ENCODE measurements at regions of chr5 and their contacts with region 1.

Region 1: GRCh38 chr5:164475339-164475977 is 970.0 kb downstream of the MAT2B start:
- DNase-seq: no peak
- ATAC-seq: no peak
- H3K4me3 ChIP-seq: no peak overlapping the region
- H3K27ac ChIP-seq: no peak overlapping the region
- H3K4me1 ChIP-seq: no peaks in the 10 kb centered on the region
- H3K27me3 ChIP-seq: no peaks in the 10 kb centered on the region
- CTCF ChIP-seq: peak in 10 of 12 donors; percentile 31 to 61 (median 50)
- POLR2A ChIP-seq: no peak

Region 2: DNA sequence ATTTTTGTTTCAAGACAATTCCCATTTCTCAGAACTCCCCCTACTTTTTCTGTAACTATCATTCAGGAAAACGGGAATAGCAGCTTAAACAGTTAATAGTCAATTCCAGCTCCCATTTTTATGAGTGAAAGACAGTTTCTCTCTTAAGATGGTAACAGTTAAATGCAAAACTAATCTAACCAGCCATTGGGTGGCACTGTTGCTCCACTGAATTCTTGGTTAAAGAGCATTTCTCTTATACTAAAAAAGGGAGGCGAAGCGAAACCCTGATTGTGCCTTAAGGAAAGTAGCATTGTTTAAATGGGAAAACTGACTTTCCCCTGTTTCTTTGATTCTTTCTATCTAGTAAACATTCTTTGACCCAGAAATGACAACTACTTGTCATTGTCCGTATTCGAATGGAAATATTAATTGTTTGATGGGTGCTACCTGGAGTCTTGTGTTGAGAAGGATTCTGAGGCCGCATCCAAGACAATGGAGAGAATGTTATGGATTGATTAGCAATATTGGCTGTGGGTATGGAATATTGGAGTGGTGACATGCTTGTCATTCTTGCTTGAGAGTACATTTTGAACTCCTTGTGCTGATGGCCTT is 462.3 kb before region 1 on chr5:
- intact Hi-C with region 1: loop called in 2 of 10 experiments (anchors 10 kb)
- DNase-seq: peak in 3 of 5 donors; percentile 18 to 29 (median 27)
- ATAC-seq: no peak
- H3K4me3 ChIP-seq: no peak overlapping the region
- H3K27ac ChIP-seq: no peak overlapping the region
- H3K4me1 ChIP-seq: no peaks in the 10 kb centered on the region
- H3K27me3 ChIP-seq: peaks cover 0 to 2% (median 0%) of the 10 kb centered on the region in 9 donors
- CTCF ChIP-seq: peak; percentile 47 to 72 (median 60)
- POLR2A ChIP-seq: no peak

Region 3: DNA sequence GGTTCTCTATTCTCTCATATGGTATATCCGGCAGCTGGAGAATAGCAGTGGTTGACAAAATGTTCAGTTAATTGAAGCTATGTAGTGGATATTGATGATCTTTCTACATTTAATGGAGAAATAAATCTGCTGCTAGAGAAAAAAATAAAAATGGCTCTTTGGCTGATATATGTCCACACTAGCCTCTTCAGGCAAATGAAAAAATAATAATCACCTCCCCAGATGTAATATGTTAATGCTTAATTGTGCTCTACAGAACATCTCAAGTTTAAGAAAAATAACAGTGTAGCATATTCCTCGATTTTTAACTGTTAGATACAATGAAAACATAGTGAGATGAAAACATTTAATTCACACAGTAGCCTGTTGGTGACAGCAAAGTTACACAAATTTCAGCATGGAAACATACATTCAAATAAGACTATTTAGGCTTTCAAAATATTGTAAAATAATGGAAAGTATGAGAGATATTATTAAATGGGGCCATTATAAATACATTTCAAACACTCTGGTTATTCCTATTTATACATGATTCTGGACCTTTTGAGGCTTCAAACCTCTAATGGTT is 427.0 kb before region 1 on chr5:
- intact Hi-C with region 1: loop called in 5 of 10 experiments (anchors 5 to 10 kb)
- DNase-seq: no peak
- ATAC-seq: no peak
- H3K4me3 ChIP-seq: no peak overlapping the region
- H3K27ac ChIP-seq: no peak overlapping the region
- H3K4me1 ChIP-seq: no peaks in the 10 kb centered on the region
- H3K27me3 ChIP-seq: peaks cover 0 to 6% (median 0%) of the 10 kb centered on the region in 9 donors
- CTCF ChIP-seq: peak in 8 of 12 donors; percentile 20 to 47 (median 29)
- POLR2A ChIP-seq: no peak

Region 4: GRCh38 chr5:164153469-164154172 is 321.8 kb before region 1 on chr5:
- intact Hi-C with region 1: loop called in 1 of 10 experiments (anchors 10 kb)
- DNase-seq: no peak
- ATAC-seq: no peak
- H3K4me3 ChIP-seq: no peak overlapping the region
- H3K27ac ChIP-seq: no peak overlapping the region
- H3K4me1 ChIP-seq: no peaks in the 10 kb centered on the region
- H3K27me3 ChIP-seq: no peaks in the 10 kb centered on the region
- CTCF ChIP-seq: no peak
- POLR2A ChIP-seq: no peak

Region 5: DNA sequence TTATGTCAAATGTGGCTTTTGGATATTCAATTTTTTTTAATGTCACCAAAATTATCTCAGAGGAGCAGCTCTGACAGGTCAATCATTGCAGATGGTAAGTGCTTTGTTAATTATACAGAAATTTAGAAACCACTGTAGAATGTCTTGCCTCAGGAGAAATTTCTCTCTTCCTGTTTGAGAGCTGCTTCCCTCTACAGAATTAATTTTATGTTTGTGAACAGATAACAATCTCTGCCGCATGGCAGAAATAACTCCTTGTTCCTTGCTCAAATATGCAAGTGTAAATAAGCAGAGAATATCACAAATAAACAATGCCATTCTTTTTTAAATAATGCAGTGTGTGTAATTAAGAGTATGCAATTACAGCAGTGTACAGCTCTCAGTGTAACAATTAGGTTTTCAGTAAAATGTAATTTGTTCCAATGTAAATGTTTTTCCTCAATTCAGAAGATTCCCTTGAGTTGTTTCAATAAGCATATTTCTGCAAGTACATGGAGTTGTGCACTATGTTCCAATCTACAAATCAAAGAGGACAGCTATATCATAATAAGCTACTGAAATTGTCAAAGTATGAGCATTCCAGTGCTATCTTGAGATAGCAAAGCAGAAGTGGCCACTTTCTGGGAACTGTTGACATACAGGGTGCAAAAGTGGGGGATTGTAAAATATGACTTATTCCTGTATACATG is 42.7 kb after region 1 on chr5:
- intact Hi-C with region 1: no loop called
- DNase-seq: no peak
- ATAC-seq: no peak
- H3K4me3 ChIP-seq: no peak overlapping the region
- H3K27ac ChIP-seq: no peak overlapping the region
- H3K4me1 ChIP-seq: no peaks in the 10 kb centered on the region
- H3K27me3 ChIP-seq: peaks cover 0 to 6% (median 0%) of the 10 kb centered on the region in 9 donors
- CTCF ChIP-seq: no peak
- POLR2A ChIP-seq: no peak